ENCODE measurements at regions of chr17 and their contacts with region 1.

Region 1: GRCh38 chr17:58082870-58083490 is at the start of gene DYNLL2:
- DNase-seq: peak; percentile 95 to 98
- H3K4me3 ChIP-seq: peak within 1 kb of the TSS; percentile 76
- H3K4me3 Mint-ChIP-seq: peak within 1 kb of the TSS; percentile 88
- H3K27ac Mint-ChIP-seq: peak within 1 kb of the TSS; percentile 88
- H3K4me1 ChIP-seq: peaks cover 15% of the 10 kb centered on the region
- H3K4me1 Mint-ChIP-seq: peaks cover 8% of the 10 kb centered on the region
- H3K27me3 ChIP-seq: no peaks in the 10 kb centered on the region
- H3K27me3 Mint-ChIP-seq: peaks cover 3% of the 10 kb centered on the region
- CTCF ChIP-seq: no peak
- total RNA-seq, gene DYNLL2: 67.8 and 80.6 TPM in 2 replicates

Region 2: GRCh38 chr17:57987580-57988421 is 95.2 kb before region 1 on chr17 and contains the start of gene VEZF1:
- CTCF ChIA-PET with region 1: no interaction called
- POLR2A ChIA-PET with region 1: interaction called, 10 read pairs
- intact Hi-C with region 1: no loop called
- DNase-seq: peak; percentile 86 to 88
- H3K4me3 ChIP-seq: peak within 1 kb of the TSS; percentile 83
- H3K4me3 Mint-ChIP-seq: peak within 1 kb of the TSS; percentile 97
- H3K27ac Mint-ChIP-seq: peak within 1 kb of the TSS; percentile 88
- H3K4me1 ChIP-seq: peaks cover 63% of the 10 kb centered on the region
- H3K4me1 Mint-ChIP-seq: peaks cover 47% of the 10 kb centered on the region
- H3K27me3 ChIP-seq: no peaks in the 10 kb centered on the region
- H3K27me3 Mint-ChIP-seq: no peaks in the 10 kb centered on the region
- CTCF ChIP-seq: no peak
- total RNA-seq, gene VEZF1: 52.1 and 54.9 TPM in 2 replicates

Region 3: DNA sequence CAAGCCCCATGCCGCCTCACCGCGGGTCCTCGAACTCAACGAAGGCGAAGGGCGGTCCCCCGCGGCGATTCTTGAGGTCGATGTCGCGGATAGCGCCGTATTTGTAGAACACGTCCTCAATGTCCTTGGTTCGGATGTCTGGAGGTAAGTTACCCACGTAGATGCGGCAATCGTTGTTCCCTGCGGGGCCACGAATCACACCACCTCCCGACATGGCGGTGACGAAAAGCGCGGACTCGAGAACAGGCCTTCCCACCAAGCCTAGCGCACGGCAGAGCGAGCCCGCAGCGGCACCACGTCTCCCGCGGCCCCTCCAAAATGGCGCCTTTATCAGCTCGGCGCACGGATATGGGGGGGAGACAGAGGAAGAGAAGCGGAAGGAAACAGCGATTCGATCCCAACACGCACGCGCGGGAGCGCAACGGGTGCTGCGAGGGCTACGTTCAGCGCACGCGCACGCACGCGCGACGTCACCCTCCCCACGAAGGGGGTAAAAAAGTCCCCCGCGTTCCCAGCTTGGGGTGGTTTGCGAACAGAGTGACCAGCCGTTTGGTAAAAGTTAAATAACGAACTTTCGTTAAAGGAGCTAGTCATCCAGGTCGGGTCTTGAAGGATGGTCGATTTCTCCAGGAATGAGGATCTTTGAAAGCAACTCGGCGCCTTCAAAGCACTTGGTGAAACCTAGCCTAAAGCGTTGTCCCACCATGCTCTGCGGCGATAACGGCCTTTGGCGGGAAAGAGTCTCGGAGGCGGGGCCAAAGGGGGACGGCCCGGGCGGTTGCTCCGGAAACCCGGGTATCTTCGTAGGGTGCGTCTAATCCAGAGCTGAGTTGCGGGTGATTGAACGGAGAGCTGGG is 75.8 kb before region 1 on chr17 and contains the start of gene SRSF1:
- CTCF ChIA-PET with region 1: interaction called, 8 read pairs
- POLR2A ChIA-PET with region 1: interaction called, 59 read pairs
- intact Hi-C with region 1: loop called (anchors 1 kb)
- DNase-seq: peak; percentile 98
- H3K4me3 ChIP-seq: peak within 1 kb of the TSS; percentile 85
- H3K4me3 Mint-ChIP-seq: peak within 1 kb of the TSS; percentile 97
- H3K27ac Mint-ChIP-seq: peak within 1 kb of the TSS; percentile 100
- H3K4me1 ChIP-seq: peaks cover 21% of the 10 kb centered on the region
- H3K4me1 Mint-ChIP-seq: peaks cover 20% of the 10 kb centered on the region
- H3K27me3 ChIP-seq: no peaks in the 10 kb centered on the region
- H3K27me3 Mint-ChIP-seq: no peaks in the 10 kb centered on the region
- CTCF ChIP-seq: no peak
- total RNA-seq, gene SRSF1: 308 and 325 TPM in 2 replicates

Region 4: GRCh38 chr17:58020401-58020800 is 62.6 kb before region 1 on chr17:
- CTCF ChIA-PET with region 1: no interaction called
- POLR2A ChIA-PET with region 1: interaction called, 11 read pairs
- intact Hi-C with region 1: loop called (anchors 1 kb)
- DNase-seq: no peak
- H3K4me3 ChIP-seq: no peak overlapping the region
- H3K4me3 Mint-ChIP-seq: no peak overlapping the region
- H3K27ac Mint-ChIP-seq: no peak overlapping the region
- H3K4me1 ChIP-seq: peaks cover 27% of the 10 kb centered on the region
- H3K4me1 Mint-ChIP-seq: peaks cover 19% of the 10 kb centered on the region
- H3K27me3 ChIP-seq: no peaks in the 10 kb centered on the region
- H3K27me3 Mint-ChIP-seq: no peaks in the 10 kb centered on the region
- CTCF ChIP-seq: no peak

Region 5: GRCh38 chr17:58028578-58028977 is 54.4 kb before region 1 on chr17:
- CTCF ChIA-PET with region 1: no interaction called
- POLR2A ChIA-PET with region 1: no interaction called
- intact Hi-C with region 1: loop called (anchors 1 kb)
- DNase-seq: no peak
- H3K4me3 ChIP-seq: no peak overlapping the region
- H3K4me3 Mint-ChIP-seq: no peak overlapping the region
- H3K27ac Mint-ChIP-seq: no peak overlapping the region
- H3K4me1 ChIP-seq: peaks cover 4% of the 10 kb centered on the region
- H3K4me1 Mint-ChIP-seq: peaks cover under 1% of the 10 kb centered on the region
- H3K27me3 ChIP-seq: no peaks in the 10 kb centered on the region
- H3K27me3 Mint-ChIP-seq: no peaks in the 10 kb centered on the region
- CTCF ChIP-seq: no peak

Region 6: GRCh38 chr17:58105093-58105492 is 22.1 kb after region 1 on chr17:
- CTCF ChIA-PET with region 1: no interaction called
- POLR2A ChIA-PET with region 1: no interaction called
- intact Hi-C with region 1: no loop called
- DNase-seq: no peak
- H3K4me3 ChIP-seq: no peak overlapping the region
- H3K4me3 Mint-ChIP-seq: no peak overlapping the region
- H3K27ac Mint-ChIP-seq: no peak overlapping the region
- H3K4me1 ChIP-seq: no peaks in the 10 kb centered on the region
- H3K4me1 Mint-ChIP-seq: peaks cover 6% of the 10 kb centered on the region
- H3K27me3 ChIP-seq: no peaks in the 10 kb centered on the region
- H3K27me3 Mint-ChIP-seq: peaks cover 3% of the 10 kb centered on the region
- CTCF ChIP-seq: no peak

Region 7: DNA sequence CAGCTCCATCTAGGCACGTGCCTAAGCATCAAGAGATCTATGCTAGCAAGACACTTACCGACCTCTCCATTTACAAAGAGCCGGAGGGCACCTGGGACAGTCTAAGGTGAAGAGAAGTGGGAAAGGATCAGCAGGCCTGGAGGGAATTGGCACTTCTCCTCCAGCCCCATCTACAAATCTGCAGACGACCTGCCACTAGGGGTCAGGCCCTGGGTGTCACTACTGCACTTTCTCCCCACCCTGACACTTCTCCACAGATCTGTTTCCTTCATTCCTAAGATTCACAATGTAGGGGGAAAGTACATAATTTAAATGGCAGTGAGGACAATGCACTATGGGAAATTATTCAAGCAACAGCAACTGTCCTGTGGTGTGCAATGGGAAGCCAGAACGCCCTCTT is 127.9 kb after region 1 on chr17:
- CTCF ChIA-PET with region 1: no interaction called
- POLR2A ChIA-PET with region 1: no interaction called
- intact Hi-C with region 1: no loop called
- DNase-seq: peak in 1 of 2 experiments; percentile 42
- H3K4me3 ChIP-seq: no peak overlapping the region
- H3K4me3 Mint-ChIP-seq: no peak overlapping the region
- H3K27ac Mint-ChIP-seq: no peak overlapping the region
- H3K4me1 ChIP-seq: peaks cover 18% of the 10 kb centered on the region
- H3K4me1 Mint-ChIP-seq: peaks cover 10% of the 10 kb centered on the region
- H3K27me3 ChIP-seq: no peaks in the 10 kb centered on the region
- H3K27me3 Mint-ChIP-seq: no peaks in the 10 kb centered on the region
- CTCF ChIP-seq: peak; percentile 42 to 53